ENCODE measurements at regions of chr3 and their contacts with region 1.

Region 1: GRCh38 chr3:126475413-126476114 is at the start of gene ZXDC:
- DNase-seq: peak; percentile 96
- ATAC-seq: peak; percentile 88
- H3K4me3 Mint-ChIP-seq: peak within 1 kb of the TSS; percentile 95
- H3K27ac Mint-ChIP-seq: peak within 1 kb of the TSS; percentile 91
- H3K4me1 Mint-ChIP-seq: peaks cover 40% of the 10 kb centered on the region
- H3K27me3 Mint-ChIP-seq: no peaks in the 10 kb centered on the region
- total RNA-seq, gene ZXDC: 21.6 to 23.1 TPM

Region 2: DNA sequence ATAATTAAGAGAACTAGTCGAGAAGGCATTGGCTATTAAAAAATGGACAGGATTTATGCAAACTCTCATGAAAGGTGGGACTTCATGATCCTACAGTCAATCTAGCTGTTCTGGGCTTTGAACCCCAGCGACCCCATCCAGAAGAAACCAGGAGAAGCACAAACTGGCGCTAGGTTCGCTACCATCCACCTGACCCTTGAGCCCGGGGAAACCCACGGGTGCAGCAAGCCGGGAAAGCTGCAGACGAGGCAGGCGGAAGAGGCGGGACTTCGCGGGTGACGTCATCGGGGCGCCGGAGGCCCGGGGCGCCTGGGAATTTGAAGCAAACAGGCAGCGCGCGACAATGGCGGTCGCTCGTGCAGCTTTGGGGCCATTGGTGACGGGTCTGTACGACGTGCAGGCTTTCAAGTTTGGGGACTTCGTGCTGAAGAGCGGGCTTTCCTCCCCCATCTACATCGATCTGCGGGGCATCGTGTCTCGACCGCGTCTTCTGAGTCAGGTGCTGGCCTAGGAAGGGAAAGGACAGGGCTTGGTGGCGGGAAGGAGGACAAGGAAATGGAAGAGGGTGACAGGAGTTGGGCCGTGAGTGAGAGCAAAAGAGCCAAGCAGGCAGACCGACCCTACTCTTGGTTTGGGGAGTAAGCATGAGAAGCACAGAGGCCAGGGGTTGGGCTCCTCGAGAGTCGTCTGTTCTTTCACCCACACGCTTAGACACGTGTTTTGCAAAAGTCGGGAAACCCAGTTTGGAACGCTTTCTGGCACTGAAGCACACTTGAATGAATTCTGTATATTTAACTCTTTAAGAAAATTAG is 1745.2 kb before region 1 on chr3 and contains the start of gene UMPS:
- CTCF ChIA-PET with region 1: no interaction called
- POLR2A ChIA-PET with region 1: no interaction called
- intact Hi-C with region 1: loop called in 1 of 2 experiments (anchors 10 kb)
- DNase-seq: peak; percentile 97
- ATAC-seq: peak; percentile 99
- H3K4me3 Mint-ChIP-seq: peak within 1 kb of the TSS; percentile 100
- H3K27ac Mint-ChIP-seq: peak within 1 kb of the TSS; percentile 100
- H3K4me1 Mint-ChIP-seq: peaks cover 32% of the 10 kb centered on the region
- H3K27me3 Mint-ChIP-seq: peaks cover 7% of the 10 kb centered on the region
- total RNA-seq, gene UMPS: 35.9 to 42.4 TPM

Region 3: DNA sequence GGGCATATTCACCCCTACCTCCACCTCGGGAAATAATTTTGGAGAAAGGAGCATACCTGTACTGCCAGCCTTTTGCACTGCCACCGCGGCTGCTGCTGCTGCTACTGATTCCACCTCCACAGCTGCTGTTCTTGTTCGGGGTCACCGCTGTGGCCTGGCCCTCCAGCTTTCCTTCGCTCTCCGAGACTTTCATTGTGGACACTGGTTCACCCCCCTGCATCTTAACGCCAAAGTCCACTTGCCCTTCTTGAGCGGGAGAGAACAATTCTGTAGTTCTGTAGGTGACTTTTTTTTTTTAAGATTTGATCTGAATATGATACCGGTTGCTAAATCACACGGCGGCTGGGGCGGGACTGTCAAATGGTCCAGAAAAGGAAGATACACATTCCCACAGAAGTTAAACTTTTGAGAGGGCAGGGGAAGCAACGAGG is 881.0 kb before region 1 on chr3:
- CTCF ChIA-PET with region 1: no interaction called
- POLR2A ChIA-PET with region 1: no interaction called
- intact Hi-C with region 1: loop called in 1 of 2 experiments (anchors 2 kb)
- DNase-seq: peak; percentile 42
- ATAC-seq: no peak
- H3K4me3 Mint-ChIP-seq: peak overlapping the region; percentile 92
- H3K27ac Mint-ChIP-seq: peak overlapping the region; percentile 91
- H3K4me1 Mint-ChIP-seq: peaks cover 24% of the 10 kb centered on the region
- H3K27me3 Mint-ChIP-seq: no peaks in the 10 kb centered on the region

Region 4: DNA sequence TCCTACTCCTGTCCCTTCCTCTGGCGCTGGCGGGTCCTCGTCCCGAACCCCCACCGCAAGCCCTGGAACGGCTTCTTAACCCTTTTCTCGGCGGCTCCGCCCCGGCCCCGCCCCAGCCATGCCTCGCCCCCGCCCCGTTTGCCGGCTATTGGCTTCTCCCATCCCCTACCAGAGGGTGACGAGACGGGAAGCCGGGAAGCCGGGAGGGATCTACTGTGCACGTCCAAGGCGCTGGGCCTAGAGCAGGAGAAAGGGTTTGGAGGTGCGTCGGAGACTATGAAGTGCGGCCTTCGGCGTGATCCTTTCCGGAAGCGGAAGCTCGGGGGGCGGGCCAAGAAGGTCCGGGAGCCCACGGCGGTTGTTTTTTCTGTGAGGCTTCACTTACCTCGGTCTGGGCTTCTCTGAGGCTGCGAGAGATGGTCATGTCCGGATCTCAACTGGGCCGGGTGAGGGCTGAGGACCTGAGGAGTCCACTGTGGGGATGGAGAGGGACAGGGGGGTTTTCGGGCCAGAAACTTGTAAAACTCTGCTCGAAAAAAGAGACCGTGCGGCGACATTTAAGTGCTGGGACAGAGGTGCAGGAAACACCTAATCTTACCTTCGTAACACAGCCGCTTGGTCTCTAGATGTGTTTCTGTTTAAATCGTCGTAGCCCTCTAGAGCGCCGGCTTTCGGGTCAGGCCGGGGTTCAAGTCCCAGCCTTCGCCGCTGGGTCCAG is 485.2 kb before region 1 on chr3:
- CTCF ChIA-PET with region 1: no interaction called
- POLR2A ChIA-PET with region 1: no interaction called
- intact Hi-C with region 1: loop called in 1 of 2 experiments (anchors 1 kb)
- DNase-seq: peak; percentile 87
- ATAC-seq: peak; percentile 94
- H3K4me3 Mint-ChIP-seq: peak overlapping the region; percentile 97
- H3K27ac Mint-ChIP-seq: peak overlapping the region; percentile 96
- H3K4me1 Mint-ChIP-seq: peaks cover 25% of the 10 kb centered on the region
- H3K27me3 Mint-ChIP-seq: no peaks in the 10 kb centered on the region

Region 5: GRCh38 chr3:126357295-126358037 is 118.1 kb before region 1 on chr3 and contains the start of gene KLF15:
- CTCF ChIA-PET with region 1: interaction called, 3 read pairs
- POLR2A ChIA-PET with region 1: no interaction called
- intact Hi-C with region 1: loop called (anchors 1 to 5 kb)
- DNase-seq: peak; percentile 87
- ATAC-seq: peak; percentile 95
- H3K4me3 Mint-ChIP-seq: peak within 1 kb of the TSS; percentile 73
- H3K27ac Mint-ChIP-seq: no peak within 1 kb of the TSS
- H3K4me1 Mint-ChIP-seq: peaks cover 9% of the 10 kb centered on the region
- H3K27me3 Mint-ChIP-seq: peaks cover 44% of the 10 kb centered on the region
- total RNA-seq, gene KLF15: 0.32 to 0.53 TPM

Region 6: GRCh38 chr3:126684218-126684751 is 208.7 kb after region 1 on chr3:
- CTCF ChIA-PET with region 1: no interaction called
- POLR2A ChIA-PET with region 1: no interaction called
- intact Hi-C with region 1: no loop called
- DNase-seq: no peak
- ATAC-seq: no peak
- H3K4me3 Mint-ChIP-seq: no peak overlapping the region
- H3K27ac Mint-ChIP-seq: no peak overlapping the region
- H3K4me1 Mint-ChIP-seq: no peaks in the 10 kb centered on the region
- H3K27me3 Mint-ChIP-seq: peaks cover 2% of the 10 kb centered on the region

Region 7: DNA sequence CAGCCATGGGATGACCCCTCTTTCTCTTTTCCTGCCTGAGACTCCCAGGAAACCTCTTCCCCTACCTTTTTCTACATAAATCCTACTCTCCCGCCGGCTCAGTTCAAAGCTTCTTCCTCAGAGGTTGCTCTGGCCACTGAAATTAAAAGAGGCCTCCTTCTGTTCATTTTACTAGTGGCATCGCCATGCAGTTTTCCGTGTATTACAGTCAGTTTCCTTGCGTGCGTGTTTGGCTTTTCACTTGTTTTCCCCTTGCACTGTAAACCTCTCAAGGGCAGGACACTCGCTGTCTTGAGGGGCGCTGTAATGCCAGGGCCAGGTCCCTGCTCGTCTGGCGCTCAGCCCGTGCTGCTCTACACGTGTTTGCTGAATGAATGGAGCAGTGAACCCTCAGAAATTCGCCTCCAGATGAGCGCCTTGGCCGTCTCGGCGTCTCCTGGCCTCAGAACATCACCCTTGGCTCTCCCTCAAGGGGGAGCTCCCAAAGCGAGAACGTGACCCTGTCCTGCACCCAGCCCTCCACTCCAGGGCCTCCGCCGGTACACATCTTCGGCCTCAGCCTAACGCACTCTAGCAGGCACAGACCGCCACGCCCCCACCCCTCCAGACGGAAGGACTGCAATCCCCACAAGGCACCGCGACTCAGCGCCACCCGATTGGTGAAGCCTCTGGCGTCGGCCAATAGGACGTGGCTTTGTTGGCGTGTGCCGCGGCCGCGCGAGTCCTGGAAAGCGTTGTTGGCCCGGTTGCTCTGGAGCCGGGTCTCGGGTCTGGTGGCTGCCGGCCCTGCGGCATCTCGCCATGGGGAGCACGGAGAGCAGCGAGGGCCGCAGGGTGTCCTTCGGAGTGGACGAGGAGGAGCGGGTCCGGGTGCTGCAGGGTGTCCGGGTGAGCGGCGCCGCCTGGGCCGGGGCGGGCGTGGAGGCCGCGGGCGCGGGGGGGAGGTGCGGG is 228.2 kb after region 1 on chr3 and contains the start of gene CHCHD6:
- CTCF ChIA-PET with region 1: no interaction called
- POLR2A ChIA-PET with region 1: no interaction called
- intact Hi-C with region 1: loop called in 1 of 2 experiments (anchors 1 kb)
- DNase-seq: peak; percentile 98
- ATAC-seq: peak; percentile 99
- H3K4me3 Mint-ChIP-seq: peak within 1 kb of the TSS; percentile 92
- H3K27ac Mint-ChIP-seq: peak within 1 kb of the TSS; percentile 82
- H3K4me1 Mint-ChIP-seq: peaks cover 23% of the 10 kb centered on the region
- H3K27me3 Mint-ChIP-seq: peaks cover 9% of the 10 kb centered on the region
- total RNA-seq, gene CHCHD6: 17.1 to 17.7 TPM

Region 8: DNA sequence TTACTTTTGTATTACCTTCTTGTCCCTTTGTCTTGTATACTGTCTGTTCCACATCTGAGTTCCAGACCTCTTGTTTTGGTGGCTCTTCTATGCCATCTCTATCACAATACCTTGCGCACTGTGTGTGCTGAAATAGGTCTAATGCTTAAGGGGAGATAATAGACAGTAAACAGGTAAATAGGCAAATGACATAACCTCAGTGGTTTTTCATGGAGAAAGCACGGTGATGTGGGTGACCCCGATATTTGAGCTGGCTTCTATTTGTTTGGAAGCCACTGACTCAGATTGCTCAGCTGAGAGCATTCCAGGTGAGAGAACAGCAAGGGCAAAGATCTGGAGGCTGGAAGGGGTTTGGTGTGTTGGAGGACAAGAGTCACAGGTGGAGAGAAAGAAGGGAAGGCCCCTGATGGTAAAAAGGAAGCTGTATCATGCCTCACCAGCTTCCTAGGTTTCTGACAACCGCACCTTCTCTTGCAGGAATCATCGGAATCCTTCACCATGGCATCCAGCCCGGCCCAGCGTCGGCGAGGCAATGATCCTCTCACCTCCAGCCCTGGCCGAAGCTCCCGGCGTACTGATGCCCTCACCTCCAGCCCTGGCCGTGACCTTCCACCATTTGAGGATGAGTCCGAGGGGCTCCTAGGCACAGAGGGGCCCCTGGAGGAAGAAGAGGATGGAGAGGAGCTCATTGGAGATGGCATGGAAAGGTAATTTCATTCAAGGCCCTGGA is 1123.4 kb after region 1 on chr3:
- CTCF ChIA-PET with region 1: no interaction called
- POLR2A ChIA-PET with region 1: no interaction called
- intact Hi-C with region 1: loop called in 1 of 2 experiments (anchors 1 kb)
- DNase-seq: no peak
- ATAC-seq: no peak
- H3K4me3 Mint-ChIP-seq: peak overlapping the region; percentile 80
- H3K27ac Mint-ChIP-seq: peak overlapping the region; percentile 96
- H3K4me1 Mint-ChIP-seq: peaks cover 41% of the 10 kb centered on the region
- H3K27me3 Mint-ChIP-seq: no peaks in the 10 kb centered on the region